HEK293T (cell line): ENCODE measurements at regions of chr15 and their contacts with region 1.

Region 1: GRCh38 chr15:74950078-74951000 is 6.2 kb downstream of the RPP25 start:
- DNase-seq: peak; percentile 82

Region 2: DNA sequence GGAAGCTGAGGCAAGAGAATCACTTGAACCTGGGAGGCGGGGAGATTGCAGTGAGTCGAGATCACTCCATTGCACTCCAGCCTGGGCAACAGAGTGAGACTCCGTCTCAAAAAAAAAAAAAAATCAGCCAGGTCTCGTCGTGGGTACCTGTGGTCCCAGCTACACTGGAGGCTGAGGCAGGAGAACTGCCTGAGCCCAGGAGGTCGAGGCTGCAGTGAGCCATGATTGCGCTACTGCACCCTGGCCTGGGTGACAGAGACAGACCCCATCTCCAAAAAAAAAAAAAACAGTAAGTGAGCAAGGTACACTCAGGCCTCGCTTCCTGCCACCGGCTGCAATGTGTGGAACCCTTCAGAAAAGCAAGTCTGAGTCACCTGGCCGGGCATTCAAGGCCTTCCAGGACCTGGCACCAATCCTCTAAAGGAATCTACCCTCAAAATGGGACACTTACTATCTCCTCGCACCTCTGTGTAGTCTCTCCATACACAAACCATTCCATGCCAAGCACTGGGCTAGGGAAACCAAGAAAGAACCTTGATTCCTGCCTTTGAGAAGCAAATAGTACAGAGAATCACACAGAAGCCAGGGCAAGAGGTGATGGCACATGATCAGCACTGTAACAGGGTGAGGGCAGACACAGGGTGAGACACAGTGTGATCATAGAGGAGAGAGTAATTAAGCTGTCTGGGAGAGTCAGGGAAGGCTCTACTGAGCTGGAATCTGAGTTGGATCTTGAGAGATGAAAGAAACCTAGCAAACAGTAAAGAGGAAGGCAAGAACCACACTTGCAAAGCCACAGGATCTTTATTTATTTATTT is 86.9 kb before region 1 on chr15:
- CTCF ChIA-PET with region 1: no interaction called
- POLR2A ChIA-PET with region 1: no interaction called
- DNase-seq: no peak

Region 3: DNA sequence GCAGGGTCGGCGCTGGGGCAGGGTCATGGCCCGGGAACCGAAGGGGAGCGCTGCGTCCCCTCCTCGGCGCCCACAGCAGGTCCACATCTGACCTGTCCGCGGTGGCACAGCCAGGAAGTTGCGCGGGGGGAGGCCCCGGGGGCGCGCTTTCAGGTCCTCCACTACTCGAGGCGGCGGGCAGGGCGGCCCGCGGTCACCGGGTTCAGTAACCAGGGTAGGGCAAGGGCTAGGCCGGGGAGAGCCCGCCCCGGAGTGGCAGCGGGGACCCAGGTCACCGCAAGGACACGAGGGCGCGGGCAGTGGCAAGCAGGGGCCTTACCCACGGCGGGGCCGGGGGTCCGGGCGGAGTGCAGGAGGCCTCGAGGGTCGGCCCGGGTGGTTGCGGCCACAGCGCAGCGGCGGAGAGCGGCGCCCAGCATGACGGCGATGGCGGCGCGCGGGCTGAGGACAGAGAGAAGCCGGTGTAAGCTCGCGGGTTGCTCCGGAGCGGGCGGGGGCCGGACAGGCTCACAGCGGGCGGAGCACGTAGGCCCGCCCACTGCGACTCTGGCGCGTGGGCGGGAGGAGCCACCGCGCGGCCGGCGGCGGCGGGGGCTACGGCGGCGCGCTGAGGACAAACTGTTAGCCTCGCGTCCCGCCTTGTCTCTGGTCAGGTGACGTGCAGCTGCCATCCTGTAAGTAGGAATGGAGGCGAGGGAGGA is 12.6 kb before region 1 on chr15 and contains the start of gene COX5A:
- CTCF ChIA-PET with region 1: interaction called, 8 read pairs
- POLR2A ChIA-PET with region 1: interaction called, 48 read pairs
- DNase-seq: peak; percentile 95

Region 4: DNA sequence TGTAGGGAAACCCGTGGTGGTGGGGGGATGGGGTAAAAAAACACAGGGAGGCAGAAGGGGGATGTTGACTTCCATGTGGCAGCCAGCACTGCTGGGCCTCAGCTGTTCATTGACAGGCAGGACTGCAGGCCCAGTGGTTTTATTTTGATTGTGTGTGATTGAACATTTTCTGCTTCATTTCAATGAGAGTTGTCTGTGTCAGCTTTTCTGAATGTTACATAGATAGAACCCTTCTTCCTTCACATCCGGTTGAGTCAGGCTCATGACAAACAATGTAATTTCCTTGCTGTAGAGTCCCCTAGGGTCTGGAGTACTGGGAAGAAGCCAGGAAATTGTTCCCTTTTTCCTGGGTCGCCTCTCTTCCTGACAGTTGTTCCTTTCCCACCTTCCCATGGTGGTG is 14.5 kb after region 1 on chr15:
- CTCF ChIA-PET with region 1: interaction called, 22 read pairs
- POLR2A ChIA-PET with region 1: interaction called, 3 read pairs
- DNase-seq: no peak

Region 5: DNA sequence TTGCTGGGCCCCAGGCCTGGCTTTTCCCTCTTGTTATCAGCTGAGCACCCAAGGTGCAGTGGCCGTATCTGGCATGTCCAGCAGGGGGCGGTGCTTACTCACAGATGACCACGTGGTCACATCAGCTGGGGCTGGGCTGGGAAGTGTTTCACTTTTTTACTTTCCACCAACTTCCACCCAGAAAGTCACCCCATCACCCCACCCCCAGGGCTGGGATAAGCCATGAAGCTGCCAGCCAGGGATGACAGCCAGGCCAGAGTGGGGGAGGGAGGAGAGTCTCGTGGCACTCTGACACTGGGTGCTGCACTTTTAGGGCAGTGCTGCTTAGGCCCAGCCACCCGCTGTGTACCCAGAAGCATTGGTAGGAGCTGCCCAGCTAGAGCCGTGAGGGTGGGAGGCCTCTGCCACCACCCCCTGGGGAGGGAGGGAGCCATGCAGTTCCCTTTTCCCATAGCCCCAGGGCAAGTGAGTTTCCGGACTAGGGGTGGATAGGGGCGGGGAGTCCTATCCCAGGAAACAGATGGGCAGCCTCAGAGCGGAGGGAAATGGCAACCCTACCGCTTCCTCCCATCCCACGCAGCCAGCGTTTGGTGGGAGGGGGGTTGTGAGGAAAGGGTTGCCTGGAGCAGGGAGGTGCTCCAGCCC is 79.2 kb after region 1 on chr15:
- CTCF ChIA-PET with region 1: no interaction called
- POLR2A ChIA-PET with region 1: no interaction called
- DNase-seq: peak; percentile 85